ENCODE measurements at regions of chr7 and their contacts with region 1.

Region 1: GRCh38 chr7:51162724-51163329 is 153.8 kb downstream of the COBL start:
- H3K4me3 ChIP-seq: no peak overlapping the region
- H3K27ac ChIP-seq: no peak overlapping the region
- H3K4me1 ChIP-seq: no peaks in the 10 kb centered on the region
- CTCF ChIP-seq: peak; percentile 45; the same call in 1 of the 2 replicates

Region 2: DNA sequence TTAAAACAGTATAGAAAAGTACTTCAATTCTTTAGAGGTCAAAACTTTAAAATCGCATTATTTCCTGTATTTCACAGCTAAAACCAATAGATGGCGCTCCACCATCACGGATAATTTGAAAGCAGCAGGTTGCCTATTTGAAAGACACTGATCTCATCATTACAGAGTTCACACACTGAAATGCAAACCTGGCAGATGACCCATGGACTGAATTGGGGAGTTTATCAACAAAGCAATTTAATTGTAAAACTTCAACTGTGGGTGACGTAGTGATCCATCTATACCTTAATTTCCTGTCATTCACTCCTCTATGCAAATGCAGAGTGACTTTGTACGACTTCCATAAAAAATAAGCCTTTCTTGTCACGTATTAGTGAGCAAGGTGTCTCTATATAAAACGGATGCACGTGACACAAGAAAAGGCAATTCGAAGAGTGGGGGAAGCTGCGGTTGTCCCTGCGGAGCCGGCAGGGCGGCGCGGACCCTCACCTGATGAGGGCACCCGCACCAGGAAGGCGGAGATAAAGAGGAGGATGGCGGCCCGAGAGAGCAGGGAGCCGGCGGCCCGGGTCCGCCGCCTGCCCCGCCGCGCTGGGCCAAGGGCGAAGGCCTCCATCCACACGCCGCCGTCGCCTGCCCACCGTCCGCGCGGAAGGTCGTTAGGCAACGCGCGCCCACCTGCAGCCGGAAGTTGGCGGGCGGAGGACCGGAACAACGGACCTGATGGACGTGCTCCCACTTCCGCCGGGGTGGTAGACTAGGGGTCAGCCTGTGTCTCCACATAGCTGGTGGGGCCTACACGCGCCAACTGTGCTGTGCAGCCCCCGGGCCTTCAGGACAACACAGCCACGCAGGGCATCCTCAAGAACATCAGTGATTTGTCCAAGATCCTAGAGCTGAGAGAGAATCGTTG is 1070.0 kb before region 1 on chr7 and contains the start of gene ZPBP:
- CTCF ChIA-PET with region 1: interaction called, 18 read pairs
- POLR2A ChIA-PET with region 1: no interaction called
- H3K4me3 ChIP-seq: no peak within 1 kb of the TSS
- H3K27ac ChIP-seq: no peak within 1 kb of the TSS
- H3K4me1 ChIP-seq: no peaks in the 10 kb centered on the region
- CTCF ChIP-seq: 0 out of 2 replicates have a peak, but pooled peaks have one; percentile 17

Region 3: GRCh38 chr7:50970092-50970491 is 192.7 kb before region 1 on chr7:
- CTCF ChIA-PET with region 1: no interaction called
- POLR2A ChIA-PET with region 1: no interaction called
- H3K4me3 ChIP-seq: no peak overlapping the region
- H3K27ac ChIP-seq: no peak overlapping the region
- H3K4me1 ChIP-seq: no peaks in the 10 kb centered on the region
- CTCF ChIP-seq: no peak

Region 4: DNA sequence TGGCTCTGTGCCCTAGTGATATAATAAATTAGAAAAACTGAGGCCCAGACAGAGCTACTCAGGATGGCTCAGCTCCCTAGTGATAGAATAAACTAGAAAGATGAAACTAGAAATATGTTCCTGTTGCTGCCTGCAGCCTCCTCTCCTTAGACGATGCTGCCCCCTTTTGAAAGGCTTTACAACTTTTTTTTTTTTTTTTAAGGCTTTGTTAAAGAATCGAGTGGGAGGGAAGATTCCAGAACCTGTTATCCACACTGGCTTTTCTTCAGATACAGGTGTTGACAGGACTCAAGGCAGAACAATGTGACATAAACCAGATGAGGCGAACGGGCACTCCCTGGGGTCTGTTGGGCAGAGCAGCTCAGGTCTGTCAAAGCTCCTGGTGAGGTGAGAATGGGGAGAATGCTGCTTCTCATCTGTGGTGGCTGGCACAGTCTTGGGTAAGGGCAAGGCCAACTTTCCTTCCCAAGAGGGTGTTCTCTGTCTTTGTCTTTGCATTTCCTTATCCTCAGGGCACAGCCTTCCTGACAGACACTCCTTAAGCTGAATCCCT is 21.3 kb before region 1 on chr7:
- CTCF ChIA-PET with region 1: interaction called, 32 read pairs
- POLR2A ChIA-PET with region 1: no interaction called
- H3K4me3 ChIP-seq: no peak overlapping the region
- H3K27ac ChIP-seq: no peak overlapping the region
- H3K4me1 ChIP-seq: no peaks in the 10 kb centered on the region
- CTCF ChIP-seq: peak; percentile 39; the same call in 1 of the 2 replicates

Region 5: GRCh38 chr7:51350200-51350921 is 187.5 kb after region 1 on chr7:
- CTCF ChIA-PET with region 1: interaction called, 88 read pairs
- POLR2A ChIA-PET with region 1: no interaction called
- H3K4me3 ChIP-seq: no peak overlapping the region
- H3K27ac ChIP-seq: peak overlapping the region; percentile 12
- H3K4me1 ChIP-seq: peaks cover 11% of the 10 kb centered on the region
- CTCF ChIP-seq: no peak

Region 6: DNA sequence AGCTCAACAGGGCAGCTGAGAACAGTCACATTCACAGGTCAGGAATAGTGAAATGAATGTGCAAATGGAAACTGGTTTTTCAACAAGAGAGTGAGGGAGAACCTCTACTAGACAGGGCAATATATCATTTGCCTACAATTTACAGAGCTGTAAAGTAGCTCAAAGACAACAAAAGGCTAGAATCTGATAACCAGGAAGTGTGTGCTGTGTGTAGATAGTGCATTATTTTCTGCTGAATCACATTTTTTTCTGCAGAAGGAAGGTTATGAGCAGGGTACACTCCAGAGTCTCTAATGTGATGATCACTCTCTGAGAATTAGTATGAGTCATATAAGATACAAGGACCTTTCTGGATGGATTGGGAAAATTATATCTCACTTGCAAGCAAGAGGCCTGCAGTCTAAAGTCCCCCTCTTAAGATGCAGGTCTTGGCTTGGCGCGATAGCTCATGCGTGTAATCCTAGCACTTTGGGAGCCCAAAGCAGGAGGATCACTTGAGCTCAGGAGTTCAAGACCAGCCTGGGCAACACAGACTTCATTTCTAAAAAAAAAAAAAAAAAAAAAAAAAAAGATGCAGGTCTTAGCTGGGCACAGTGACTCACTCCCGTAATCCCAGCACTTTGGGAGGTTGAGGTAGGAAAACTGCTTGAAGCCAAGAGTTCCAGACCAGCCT is 213.7 kb after region 1 on chr7:
- CTCF ChIA-PET with region 1: interaction called, 277 read pairs
- POLR2A ChIA-PET with region 1: no interaction called
- H3K4me3 ChIP-seq: no peak overlapping the region
- H3K27ac ChIP-seq: no peak overlapping the region
- H3K4me1 ChIP-seq: no peaks in the 10 kb centered on the region
- CTCF ChIP-seq: no peak